H1 (cell line): ENCODE measurements at regions of chr10 and their contacts with region 1.

Region 1: GRCh38 chr10:77970869-77971803 is 44.6 kb upstream of the DLG5 start:
- DNase-seq: no peak
- H3K4me3 ChIP-seq: no peak overlapping the region
- H3K27ac ChIP-seq: peak overlapping the region; percentile 27; the same call in 1 of the 2 replicates
- H3K4me1 ChIP-seq: peaks cover 0 to 6% (median 0%) of the 10 kb centered on the region in 4 experiments; a peak in 2 of 7 replicates
- H3K27me3 ChIP-seq: no peaks in the 10 kb centered on the region
- CTCF ChIP-seq: no peak
- EP300 ChIP-seq: no peak
- POLR2A ChIP-seq: no peak
- RAD21 ChIP-seq: no peak

Region 2: DNA sequence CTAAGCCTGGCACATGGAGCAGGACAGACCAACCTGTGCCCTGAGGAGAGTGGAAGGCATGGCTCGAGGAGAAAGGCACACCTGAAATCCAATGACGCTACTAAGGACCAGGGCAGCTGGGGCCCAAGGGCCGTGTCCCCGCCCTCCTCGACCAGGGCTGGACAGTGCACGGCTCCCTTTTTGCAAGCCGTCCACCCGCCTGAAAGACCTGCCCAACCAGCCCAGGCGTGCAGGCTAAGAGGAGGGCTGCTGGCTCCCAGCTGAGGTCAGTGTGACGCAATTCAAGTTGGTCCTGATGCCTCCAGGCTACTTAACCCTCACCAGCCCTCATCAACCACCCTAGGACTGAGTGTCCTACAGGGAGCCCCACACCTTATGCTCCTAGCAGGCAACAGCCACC is 113.9 kb before region 1 on chr10:
- CTCF ChIA-PET with region 1: interaction called, 17 read pairs
- POLR2A ChIA-PET with region 1: interaction called, 3 read pairs
- DNase-seq: no peak
- H3K4me3 ChIP-seq: no peak overlapping the region
- H3K27ac ChIP-seq: no peak overlapping the region
- H3K4me1 ChIP-seq: peaks cover 0 to 4% (median 3%) of the 10 kb centered on the region in 4 experiments; a peak in 2 of 7 replicates
- H3K27me3 ChIP-seq: no peaks in the 10 kb centered on the region
- CTCF ChIP-seq: no peak
- EP300 ChIP-seq: no peak
- POLR2A ChIP-seq: no peak
- RAD21 ChIP-seq: no peak

Region 3: GRCh38 chr10:77907900-77908717 is 63.0 kb before region 1 on chr10:
- CTCF ChIA-PET with region 1: interaction called, 38 read pairs
- POLR2A ChIA-PET with region 1: interaction called, 5 read pairs
- DNase-seq: no peak
- H3K4me3 ChIP-seq: no peak overlapping the region
- H3K27ac ChIP-seq: no peak overlapping the region
- H3K4me1 ChIP-seq: peaks cover 0 to 6% (median 4%) of the 10 kb centered on the region in 4 experiments; a peak in 5 of 7 replicates
- H3K27me3 ChIP-seq: no peaks in the 10 kb centered on the region
- CTCF ChIP-seq: peak; percentile 82 to 93 (median 84)
- EP300 ChIP-seq: no peak
- POLR2A ChIP-seq: no peak
- RAD21 ChIP-seq: peak; percentile 73 to 82

Region 4: GRCh38 chr10:77939561-77940001 is 31.6 kb before region 1 on chr10:
- CTCF ChIA-PET with region 1: interaction called, 18 read pairs
- POLR2A ChIA-PET with region 1: interaction called, 7 read pairs
- DNase-seq: no peak
- H3K4me3 ChIP-seq: no peak overlapping the region
- H3K27ac ChIP-seq: no peak overlapping the region
- H3K4me1 ChIP-seq: peaks cover 0 to 8% (median 2%) of the 10 kb centered on the region in 4 experiments; a peak in 4 of 7 replicates
- H3K27me3 ChIP-seq: no peaks in the 10 kb centered on the region
- CTCF ChIP-seq: no peak
- EP300 ChIP-seq: no peak
- POLR2A ChIP-seq: no peak
- RAD21 ChIP-seq: no peak

Region 5: DNA sequence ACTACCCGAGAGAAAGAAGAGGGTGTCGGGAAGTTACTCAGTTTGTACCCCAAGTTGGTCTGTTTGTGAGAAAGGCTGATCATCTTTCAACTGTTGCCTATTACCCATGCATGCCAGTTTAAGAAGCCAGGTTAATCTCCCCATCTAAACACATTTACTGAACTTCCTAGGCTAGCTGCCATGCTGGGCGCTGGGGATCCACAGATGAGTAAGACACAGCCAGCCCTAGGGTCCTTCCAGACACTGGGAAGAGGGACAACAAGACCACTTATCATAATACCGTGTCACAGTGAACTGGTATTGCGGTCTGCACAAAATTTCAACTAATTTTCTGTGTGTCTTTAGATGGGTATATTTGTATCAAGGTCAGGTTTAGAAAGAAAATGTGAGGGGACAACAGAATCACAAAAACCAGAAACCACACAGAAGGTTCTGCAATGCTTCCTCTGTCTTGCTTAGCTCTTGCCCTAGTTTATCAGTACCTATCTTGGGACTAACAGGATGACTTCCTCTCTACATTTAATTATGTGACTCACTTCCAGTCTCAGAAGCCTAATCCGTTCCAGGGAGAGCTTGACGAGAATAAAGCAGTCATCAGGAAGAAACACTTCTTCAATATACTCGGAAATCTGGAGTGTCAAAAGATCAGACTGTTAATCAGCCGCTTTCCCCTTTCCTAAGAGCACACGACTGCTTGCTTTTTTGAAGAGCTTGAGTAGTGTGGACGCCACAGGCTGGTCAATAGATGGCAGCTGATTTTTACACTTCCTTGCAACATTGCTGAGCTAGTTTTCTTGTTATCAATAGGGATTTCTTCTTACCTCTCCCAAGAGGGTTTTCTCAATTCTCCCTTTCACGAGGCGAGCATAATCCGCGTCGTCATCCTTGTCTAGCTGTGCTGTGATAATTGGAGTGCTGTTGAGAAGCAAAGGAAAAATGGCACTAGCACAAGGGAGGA is 12.5 kb after region 1 on chr10:
- CTCF ChIA-PET with region 1: interaction called, 38 read pairs
- POLR2A ChIA-PET with region 1: interaction called, 3 read pairs
- DNase-seq: no peak
- H3K4me3 ChIP-seq: no peak overlapping the region
- H3K27ac ChIP-seq: no peak overlapping the region
- H3K4me1 ChIP-seq: no peaks in the 10 kb centered on the region
- H3K27me3 ChIP-seq: no peaks in the 10 kb centered on the region
- CTCF ChIP-seq: no peak
- EP300 ChIP-seq: no peak
- POLR2A ChIP-seq: no peak
- RAD21 ChIP-seq: no peak